GM12878 (cell line): ENCODE measurements at regions of chr12 and their contacts with region 1.

Region 1: DNA sequence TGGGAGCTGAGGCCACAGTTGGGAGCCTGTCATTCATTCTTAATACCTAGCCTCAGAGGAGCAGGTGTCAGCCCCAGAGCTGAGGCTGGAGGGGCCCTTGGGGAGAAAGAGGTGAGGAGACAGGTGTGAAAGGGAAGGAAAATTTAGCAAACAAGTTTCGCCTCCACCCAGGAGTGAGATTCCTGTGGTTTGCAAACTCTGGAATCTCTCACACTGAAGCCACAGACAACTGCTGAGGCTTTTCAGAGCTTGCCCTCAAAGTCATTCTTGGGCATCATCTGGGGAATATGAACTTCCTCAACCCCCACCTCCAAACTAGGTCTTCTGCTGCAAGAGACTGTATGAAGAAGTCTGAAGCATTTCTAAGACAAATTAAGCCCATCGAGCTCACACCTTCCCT is 589.5 kb upstream of the TBX3 start:
- DNase-seq: no peak
- ATAC-seq: no peak
- H3K4me3 ChIP-seq: no peak overlapping the region
- H3K27ac ChIP-seq: no peak overlapping the region
- H3K4me1 ChIP-seq: no peaks in the 10 kb centered on the region
- H3K27me3 ChIP-seq: no peaks in the 10 kb centered on the region; a peak in 1 of 4 replicates
- CTCF ChIP-seq: no peak
- EP300 ChIP-seq: no peak
- POLR2A ChIP-seq: no peak
- RAD21 ChIP-seq: no peak

Region 2: DNA sequence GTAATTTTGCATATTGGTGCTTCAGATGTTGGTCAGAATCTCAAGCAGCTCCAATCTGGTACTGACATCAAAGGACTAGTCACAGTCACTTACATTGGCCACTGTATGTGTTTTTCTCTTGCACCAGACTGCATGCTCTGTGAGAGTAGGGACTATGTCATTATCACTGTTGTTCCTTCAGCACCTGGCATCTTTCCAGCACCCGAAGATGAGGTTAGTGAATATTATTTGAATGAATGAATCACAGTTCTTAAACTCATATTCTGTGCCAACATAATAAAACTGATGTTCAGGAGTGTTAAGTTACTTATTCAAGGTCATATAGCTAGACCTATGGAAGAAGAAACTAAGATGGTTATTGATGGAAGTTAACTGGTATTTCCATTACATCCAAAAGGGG is 385.0 kb before region 1 on chr12:
- CTCF ChIA-PET with region 1: no interaction called
- POLR2A ChIA-PET with region 1: interaction called, 10 read pairs
- RAD21 ChIA-PET with region 1: no interaction called
- SMC1A ChIA-PET with region 1: no interaction called
- in situ Hi-C with region 1: no loop called
- intact Hi-C with region 1: no loop called
- DNase-seq: no peak
- ATAC-seq: no peak
- H3K4me3 ChIP-seq: no peak overlapping the region
- H3K27ac ChIP-seq: no peak overlapping the region
- H3K4me1 ChIP-seq: no peaks in the 10 kb centered on the region
- H3K27me3 ChIP-seq: no peaks in the 10 kb centered on the region
- CTCF ChIP-seq: no peak
- EP300 ChIP-seq: no peak
- POLR2A ChIP-seq: no peak
- RAD21 ChIP-seq: no peak

Region 3: GRCh38 chr12:115204957-115205754 is 68.3 kb before region 1 on chr12:
- CTCF ChIA-PET with region 1: no interaction called
- POLR2A ChIA-PET with region 1: no interaction called
- RAD21 ChIA-PET with region 1: no interaction called
- SMC1A ChIA-PET with region 1: no interaction called
- in situ Hi-C with region 1: no loop called
- intact Hi-C with region 1: no loop called
- DNase-seq: no peak
- ATAC-seq: no peak
- H3K4me3 ChIP-seq: no peak overlapping the region
- H3K27ac ChIP-seq: no peak overlapping the region
- H3K4me1 ChIP-seq: no peaks in the 10 kb centered on the region; the same call in 1 of the 2 replicates
- H3K27me3 ChIP-seq: no peaks in the 10 kb centered on the region
- CTCF ChIP-seq: no peak
- EP300 ChIP-seq: no peak
- POLR2A ChIP-seq: no peak
- RAD21 ChIP-seq: no peak